ENCODE measurements at regions of chr16 and their contacts with region 1.

Region 1: GRCh38 chr16:82129881-82130280 is 40.1 kb downstream of the MPHOSPH6 start:
- DNase-seq: no peak
- H3K4me3 ChIP-seq: no peak overlapping the region
- H3K27ac ChIP-seq: no peak overlapping the region
- H3K4me1 ChIP-seq: no peaks in the 10 kb centered on the region
- H3K27me3 ChIP-seq: no peaks in the 10 kb centered on the region
- CTCF ChIP-seq: no peak
- EP300 ChIP-seq: no peak
- POLR2A ChIP-seq: no peak

Region 2: GRCh38 chr16:80788027-80788426 is 1341.9 kb before region 1 on chr16:
- intact Hi-C with region 1: loop called in 1 of 4 experiments (anchors 5 kb)
- DNase-seq: no peak
- H3K4me3 ChIP-seq: no peak overlapping the region
- H3K27ac ChIP-seq: no peak overlapping the region
- H3K4me1 ChIP-seq: no peaks in the 10 kb centered on the region
- H3K27me3 ChIP-seq: no peaks in the 10 kb centered on the region
- CTCF ChIP-seq: no peak
- EP300 ChIP-seq: no peak
- POLR2A ChIP-seq: no peak

Region 3: GRCh38 chr16:82192665-82193064 is 62.8 kb after region 1 on chr16:
- intact Hi-C with region 1: no loop called
- DNase-seq: no peak
- H3K4me3 ChIP-seq: no peak overlapping the region
- H3K27ac ChIP-seq: no peak overlapping the region
- H3K4me1 ChIP-seq: no peaks in the 10 kb centered on the region
- H3K27me3 ChIP-seq: no peaks in the 10 kb centered on the region
- CTCF ChIP-seq: no peak
- EP300 ChIP-seq: no peak
- POLR2A ChIP-seq: no peak

Region 4: GRCh38 chr16:82322177-82322576 is 192.3 kb after region 1 on chr16:
- intact Hi-C with region 1: no loop called
- DNase-seq: no peak
- H3K4me3 ChIP-seq: no peak overlapping the region
- H3K27ac ChIP-seq: no peak overlapping the region
- H3K4me1 ChIP-seq: no peaks in the 10 kb centered on the region
- H3K27me3 ChIP-seq: no peaks in the 10 kb centered on the region
- CTCF ChIP-seq: no peak
- EP300 ChIP-seq: no peak
- POLR2A ChIP-seq: no peak